ENCODE measurements at regions of chr11 and their contacts with region 1.

Region 1: GRCh38 chr11:35800970-35801953 is 138.7 kb downstream of the TRIM44 start:
- DNase-seq: no peak
- H3K4me3 ChIP-seq: no peak overlapping the region
- CTCF ChIP-seq: no peak

Region 2: GRCh38 chr11:35811775-35812174 is 10.5 kb after region 1 on chr11:
- CTCF ChIA-PET with region 1: interaction called, 11 read pairs
- POLR2A ChIA-PET with region 1: no interaction called
- DNase-seq: no peak
- H3K4me3 ChIP-seq: no peak overlapping the region
- CTCF ChIP-seq: no peak